ENCODE measurements at regions of chr5 and their contacts with region 1.

Region 1: GRCh38 chr5:125298260-125298659 is 551.8 kb upstream of the ZNF608 start:
- DNase-seq: no peak
- ATAC-seq: no peak
- H3K4me3 ChIP-seq: no peak overlapping the region
- H3K27ac ChIP-seq: peak overlapping the region; percentile 67
- H3K4me1 ChIP-seq: peaks cover 9% of the 10 kb centered on the region
- H3K27me3 ChIP-seq: no peaks in the 10 kb centered on the region
- CTCF ChIP-seq: no peak

Region 2: GRCh38 chr5:126438871-126439270 is 1140.6 kb after region 1 on chr5:
- CTCF ChIA-PET with region 1: interaction called, 10 read pairs
- POLR2A ChIA-PET with region 1: no interaction called
- in situ Hi-C with region 1: no loop called
- intact Hi-C with region 1: no loop called
- DNase-seq: no peak
- ATAC-seq: no peak
- H3K4me3 ChIP-seq: no peak overlapping the region
- H3K27ac ChIP-seq: no peak overlapping the region
- H3K4me1 ChIP-seq: no peaks in the 10 kb centered on the region
- H3K27me3 ChIP-seq: no peaks in the 10 kb centered on the region
- CTCF ChIP-seq: no peak

Region 3: GRCh38 chr5:127088251-127089010 is 1790.2 kb after region 1 on chr5:
- CTCF ChIA-PET with region 1: no interaction called
- POLR2A ChIA-PET with region 1: no interaction called
- in situ Hi-C with region 1: no loop called
- intact Hi-C with region 1: no loop called
- DNase-seq: no peak
- ATAC-seq: no peak
- H3K4me3 ChIP-seq: no peak overlapping the region
- H3K27ac ChIP-seq: no peak overlapping the region
- H3K4me1 ChIP-seq: no peaks in the 10 kb centered on the region
- H3K27me3 ChIP-seq: peaks cover 6% of the 10 kb centered on the region
- CTCF ChIP-seq: no peak